ENCODE measurements at regions of chr9 and their contacts with region 1.

Region 1: DNA sequence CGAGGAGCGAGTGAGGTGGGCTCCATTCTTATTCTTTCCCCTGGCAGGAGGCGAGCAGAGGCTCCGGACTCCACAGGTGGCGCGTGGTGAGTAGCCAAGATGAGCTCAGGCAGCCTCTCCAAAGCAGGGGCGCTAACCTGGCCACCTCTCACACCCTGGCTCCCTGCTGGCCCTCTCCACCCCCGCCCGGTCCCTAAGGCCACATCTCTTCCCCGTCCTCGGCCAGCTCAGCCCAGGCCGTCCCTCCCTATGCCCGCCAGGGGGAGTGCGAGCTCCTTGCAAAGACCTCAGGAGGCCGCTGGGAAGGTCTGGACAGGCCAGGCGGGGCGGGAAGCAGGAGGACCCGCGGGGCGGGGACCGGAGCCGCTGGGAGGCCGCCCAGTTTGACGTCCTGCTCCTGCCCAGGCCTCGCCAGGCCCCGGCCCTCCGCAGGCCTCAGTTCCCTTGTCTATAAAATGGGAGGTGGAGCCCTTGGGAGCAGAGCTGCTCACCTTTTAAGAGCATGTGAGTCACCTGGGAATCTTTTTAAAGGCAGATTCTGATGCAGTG is 46.3 kb upstream of the GGTA1 start:
- DNase-seq: peak; percentile 91 to 99
- H3K4me3 ChIP-seq: no peak overlapping the region
- CTCF ChIP-seq: peak in 2 of 3 donors; percentile 66 to 90
- POLR2A ChIP-seq: no peak

Region 2: DNA sequence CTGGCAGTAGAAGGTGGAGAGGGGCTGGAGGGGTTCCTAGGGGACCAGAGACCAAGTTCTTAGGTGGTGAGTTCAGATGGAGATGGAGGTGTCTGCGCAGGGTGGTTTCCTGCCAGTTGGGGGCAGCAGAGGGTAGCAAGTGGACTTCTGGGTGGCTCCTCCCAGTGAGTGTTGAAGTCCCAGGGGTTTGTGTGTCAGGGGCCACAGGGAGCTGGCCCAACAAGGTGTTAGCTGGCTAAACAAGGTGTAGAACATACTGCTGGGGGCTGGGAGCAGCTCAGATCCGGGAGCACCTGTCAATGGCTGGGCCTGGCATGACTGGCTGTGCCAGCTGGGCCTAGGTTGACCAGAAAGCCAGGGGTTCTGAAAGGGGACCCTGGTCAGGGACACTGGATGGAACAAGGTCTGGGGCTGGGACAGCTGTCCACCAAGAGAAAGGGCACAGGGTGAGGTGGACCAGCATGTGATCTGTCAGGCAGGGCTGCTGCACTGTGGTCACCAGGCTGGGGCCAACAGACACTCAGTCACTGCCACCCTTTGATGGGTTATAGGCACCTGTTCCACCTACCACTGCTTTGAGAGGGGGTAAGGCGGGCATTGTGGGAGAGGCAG is 141.1 kb after region 1 on chr9:
- intact Hi-C with region 1: loop called (anchors 5 kb)
- DNase-seq: peak; percentile 47 to 96
- H3K4me3 ChIP-seq: no peak overlapping the region
- CTCF ChIP-seq: peak in 1 of 3 donors; percentile 74
- POLR2A ChIP-seq: no peak

Region 3: DNA sequence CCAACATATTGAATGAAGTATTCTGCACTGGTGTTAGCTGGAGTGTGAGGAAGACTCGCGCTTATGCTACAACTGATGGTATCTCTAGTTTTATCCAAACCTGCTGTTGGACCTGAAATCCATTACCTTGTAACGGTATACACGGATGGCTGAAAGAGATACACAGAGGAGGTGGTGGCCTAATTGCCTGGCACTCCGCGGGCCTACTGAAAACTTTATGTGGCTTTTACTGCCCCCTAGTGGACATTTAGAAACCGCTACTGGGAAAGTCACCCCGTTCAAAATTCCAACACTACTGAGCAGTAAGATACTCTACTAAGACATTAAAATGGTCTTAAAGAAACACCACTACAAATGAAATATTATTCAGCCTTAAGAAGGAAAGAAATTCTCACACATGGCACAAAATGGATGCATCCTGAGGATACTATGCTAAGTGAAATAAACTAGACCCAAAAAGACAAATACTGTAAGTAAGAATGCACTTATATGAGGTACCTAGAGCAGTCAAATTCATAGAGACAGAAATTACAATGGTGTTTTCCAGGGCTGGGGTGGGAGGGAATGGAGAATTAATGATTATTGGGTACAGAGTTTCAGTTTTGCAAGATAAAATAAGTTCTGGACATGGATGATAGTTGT is 446.7 kb after region 1 on chr9:
- intact Hi-C with region 1: loop called (anchors 5 kb)
- DNase-seq: peak; percentile 70 to 86
- H3K4me3 ChIP-seq: no peak overlapping the region
- CTCF ChIP-seq: peak in 1 of 3 donors; percentile 49
- POLR2A ChIP-seq: no peak

Measured in lower leg skin (tissue), 4 donors.